HEK293 (cell line): ENCODE measurements at regions of chr6 and their contacts with region 1.

Region 1: DNA sequence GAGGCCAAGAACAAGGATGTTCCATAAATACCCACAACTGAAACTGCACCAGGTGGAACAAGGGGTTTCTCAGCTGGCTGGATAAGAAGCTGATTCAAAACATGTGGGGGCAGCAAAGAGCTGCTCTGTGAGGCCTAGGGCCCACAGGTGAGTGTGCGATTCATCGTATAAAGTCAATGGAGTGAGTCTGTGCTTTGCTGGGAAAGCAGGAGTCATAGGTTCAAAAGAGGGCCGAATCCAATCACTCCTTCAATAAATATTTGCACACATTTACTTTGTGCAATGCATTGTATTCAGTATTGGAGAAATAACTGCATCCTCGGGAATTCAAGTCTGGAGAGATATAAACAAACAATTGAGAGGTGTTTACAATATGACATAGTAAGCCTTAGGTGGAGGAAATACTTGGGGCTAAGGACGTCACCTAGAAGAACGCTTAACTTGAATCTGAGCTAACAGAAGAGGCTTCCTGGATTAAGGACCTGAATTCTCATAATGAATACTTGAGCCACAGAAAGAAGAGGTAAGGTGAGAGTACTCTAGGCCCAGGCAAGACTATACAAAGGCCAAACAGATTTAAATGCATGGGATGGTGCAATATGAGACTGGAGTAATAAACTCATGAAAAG is 83.7 kb upstream of the TMEM30A start:
- H3K4me3 ChIP-seq: no peak overlapping the region
- H3K27ac ChIP-seq: no peak overlapping the region
- H3K4me1 ChIP-seq: no peaks in the 10 kb centered on the region
- CTCF ChIP-seq: peak; percentile 71

Region 2: DNA sequence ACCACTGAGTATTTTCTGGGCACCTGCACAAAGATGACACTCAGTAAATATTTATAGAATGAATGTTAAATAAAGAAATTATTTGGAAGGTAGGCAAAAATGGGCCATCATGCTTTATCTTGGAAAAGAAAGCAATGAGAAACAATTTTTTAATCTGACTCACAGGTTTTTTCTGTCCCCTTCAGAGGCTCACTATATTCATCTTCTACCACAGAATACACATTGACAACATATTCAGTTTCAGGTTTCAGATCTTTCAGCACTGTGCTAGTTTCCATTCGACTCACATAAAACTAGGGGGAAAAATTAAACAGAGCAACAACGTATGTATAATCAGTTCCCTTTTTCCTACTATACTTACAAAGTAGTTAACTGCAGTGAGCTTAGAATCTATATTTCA is 220.8 kb before region 1 on chr6:
- CTCF ChIA-PET with region 1: no interaction called
- POLR2A ChIA-PET with region 1: no interaction called
- H3K4me3 ChIP-seq: no peak overlapping the region
- H3K27ac ChIP-seq: no peak overlapping the region
- H3K4me1 ChIP-seq: no peaks in the 10 kb centered on the region
- CTCF ChIP-seq: no peak

Region 3: GRCh38 chr6:75266716-75267291 is 101.5 kb before region 1 on chr6:
- CTCF ChIA-PET with region 1: interaction called, 28 read pairs
- POLR2A ChIA-PET with region 1: no interaction called
- H3K4me3 ChIP-seq: no peak overlapping the region
- H3K27ac ChIP-seq: no peak overlapping the region
- H3K4me1 ChIP-seq: peaks cover 14% of the 10 kb centered on the region
- CTCF ChIP-seq: no peak; the same call in 1 of the 2 replicates

Region 4: DNA sequence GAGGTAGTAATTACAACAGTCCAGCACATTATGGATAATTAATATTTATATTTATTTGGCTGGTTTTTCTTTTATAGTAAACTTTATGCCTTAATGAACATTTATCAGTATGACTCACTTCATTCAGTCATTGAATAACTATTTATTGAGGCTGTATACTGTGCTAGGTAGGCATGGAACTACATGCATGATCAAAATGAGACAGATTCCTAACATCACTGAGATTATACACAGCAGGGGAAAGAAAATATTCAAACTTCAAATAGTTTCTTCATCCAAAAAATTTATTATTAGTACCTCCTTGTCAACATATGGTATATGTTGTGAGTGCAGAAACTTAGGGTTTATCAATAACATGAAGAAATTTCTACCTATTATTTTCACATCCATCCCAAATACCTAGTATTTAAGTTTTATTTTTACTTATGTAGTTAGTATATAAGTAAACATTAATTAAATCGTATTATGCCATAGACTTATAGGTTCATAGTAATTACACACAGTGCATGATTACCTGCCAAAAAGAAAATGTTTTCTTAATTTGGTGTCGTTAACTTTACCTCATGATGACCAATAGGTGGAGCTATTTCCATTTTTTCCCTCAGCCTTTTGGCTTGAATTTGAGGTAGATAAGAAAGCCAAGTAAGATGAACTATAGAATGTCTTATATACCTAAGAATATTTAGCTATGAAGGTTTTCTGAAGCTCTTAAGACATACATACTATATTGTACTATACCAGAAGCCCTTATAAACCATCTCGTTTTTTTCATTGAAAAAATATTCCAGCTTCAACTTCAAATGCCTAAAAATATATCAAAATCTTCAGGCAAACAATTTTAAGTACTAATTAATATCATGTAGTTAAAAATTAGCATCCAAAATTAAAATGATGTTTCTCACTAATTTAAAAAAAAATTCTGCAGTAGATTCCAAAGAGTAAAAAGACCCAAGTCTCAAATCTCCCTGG is 71.2 kb before region 1 on chr6:
- CTCF ChIA-PET with region 1: interaction called, 86 read pairs
- POLR2A ChIA-PET with region 1: interaction called, 4 read pairs
- H3K4me3 ChIP-seq: no peak overlapping the region
- H3K27ac ChIP-seq: no peak overlapping the region
- H3K4me1 ChIP-seq: no peaks in the 10 kb centered on the region
- CTCF ChIP-seq: peak; percentile 47; the same call in 1 of the 2 replicates

Region 5: DNA sequence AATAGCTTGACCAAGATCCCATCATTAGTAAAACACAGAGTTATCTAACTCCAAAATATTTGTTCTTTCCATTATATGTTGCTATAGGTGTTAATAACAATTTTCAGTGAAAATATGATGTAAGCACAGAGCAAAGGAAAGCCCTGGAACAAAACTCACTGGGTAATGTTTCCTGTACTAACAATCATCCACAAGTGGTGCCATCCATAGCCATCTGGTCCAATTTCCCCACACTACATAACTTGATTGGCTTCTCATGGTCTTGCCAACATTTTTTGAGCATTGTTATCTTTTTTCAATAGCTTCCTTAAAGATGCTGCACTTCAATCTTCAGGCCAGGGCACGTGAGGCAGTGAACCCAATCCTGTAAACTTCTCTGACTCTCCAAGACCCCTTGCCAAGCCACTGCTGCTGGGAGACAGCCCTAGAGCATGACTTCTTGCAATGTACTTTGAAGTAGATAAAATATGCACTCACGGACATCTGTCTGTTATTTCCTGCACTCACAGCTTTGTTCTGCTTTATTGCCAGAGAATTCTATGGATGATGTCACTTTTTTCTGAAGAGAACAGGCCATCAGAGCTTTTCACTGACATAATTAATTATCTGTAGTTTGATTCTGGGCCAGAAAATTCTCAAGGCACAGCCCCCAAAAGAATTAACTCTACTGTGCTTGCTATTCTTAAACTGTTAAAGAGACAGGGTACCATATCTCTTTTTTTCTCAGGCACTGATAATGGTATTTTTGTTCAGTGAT is 13.8 kb after region 1 on chr6:
- CTCF ChIA-PET with region 1: interaction called, 31 read pairs
- POLR2A ChIA-PET with region 1: interaction called, 3 read pairs
- H3K4me3 ChIP-seq: no peak overlapping the region
- H3K27ac ChIP-seq: no peak overlapping the region
- H3K4me1 ChIP-seq: peaks cover 12% of the 10 kb centered on the region
- CTCF ChIP-seq: no peak

Region 6: DNA sequence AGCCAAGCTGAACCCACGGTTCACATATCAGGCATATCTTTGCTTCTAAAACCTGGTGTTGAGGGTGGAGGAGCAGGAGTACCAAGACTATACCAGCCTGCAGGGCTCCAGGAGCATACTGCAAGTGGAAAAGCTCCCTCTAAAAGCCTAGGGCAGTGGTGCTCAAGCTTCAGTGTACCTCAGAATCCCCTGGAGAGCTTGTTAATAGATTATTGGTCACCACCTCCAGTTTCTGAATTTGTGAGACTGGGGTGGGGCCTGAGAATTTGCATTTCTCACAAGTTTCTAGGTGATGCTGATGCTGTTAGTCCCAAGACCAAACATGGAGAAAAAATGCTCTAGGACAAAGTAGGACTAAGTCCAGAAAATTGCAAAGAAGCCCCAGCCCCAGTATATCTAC is 59.9 kb after region 1 on chr6:
- CTCF ChIA-PET with region 1: interaction called, 14 read pairs
- POLR2A ChIA-PET with region 1: no interaction called
- H3K4me3 ChIP-seq: no peak overlapping the region
- H3K27ac ChIP-seq: no peak overlapping the region
- H3K4me1 ChIP-seq: peaks cover 15% of the 10 kb centered on the region
- CTCF ChIP-seq: no peak

Region 7: DNA sequence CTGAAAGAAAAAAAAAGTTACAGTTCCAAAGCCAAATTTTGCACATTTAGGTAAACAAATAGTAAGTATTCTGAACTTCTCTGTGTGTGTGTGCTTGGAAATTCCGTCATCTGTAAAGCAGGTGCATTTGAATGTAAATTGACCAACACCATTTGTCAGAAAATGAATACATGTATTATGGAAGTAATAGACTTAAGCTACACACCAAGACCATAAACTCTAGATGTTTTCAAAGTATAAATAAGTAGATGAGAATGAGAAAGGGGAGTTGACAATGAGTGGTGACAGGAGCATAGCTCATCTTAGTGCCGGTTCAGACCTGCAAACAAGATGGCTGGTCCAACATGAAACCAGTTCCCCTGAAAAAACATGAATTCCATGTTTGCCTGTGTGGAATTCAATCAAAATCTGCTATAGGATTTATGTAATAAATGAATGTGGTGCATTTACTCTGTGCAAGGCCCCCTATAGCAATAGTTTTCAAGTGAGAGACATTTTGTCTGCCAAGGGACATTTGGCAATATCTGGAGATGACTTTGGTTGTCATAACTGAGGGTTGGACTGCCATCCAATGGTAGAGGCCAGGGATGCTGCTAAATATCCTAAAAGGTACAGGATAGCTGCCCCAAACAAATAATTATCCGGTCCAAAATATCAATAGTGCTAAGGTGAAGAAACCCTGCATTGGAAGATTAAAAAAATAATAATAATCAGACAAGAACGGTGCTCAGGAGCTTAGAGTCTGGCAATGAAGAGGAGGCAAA is 136.4 kb after region 1 on chr6:
- CTCF ChIA-PET with region 1: interaction called, 37 read pairs
- POLR2A ChIA-PET with region 1: no interaction called
- H3K4me3 ChIP-seq: no peak overlapping the region
- H3K27ac ChIP-seq: no peak overlapping the region
- H3K4me1 ChIP-seq: no peaks in the 10 kb centered on the region
- CTCF ChIP-seq: peak; percentile 59

Region 8: DNA sequence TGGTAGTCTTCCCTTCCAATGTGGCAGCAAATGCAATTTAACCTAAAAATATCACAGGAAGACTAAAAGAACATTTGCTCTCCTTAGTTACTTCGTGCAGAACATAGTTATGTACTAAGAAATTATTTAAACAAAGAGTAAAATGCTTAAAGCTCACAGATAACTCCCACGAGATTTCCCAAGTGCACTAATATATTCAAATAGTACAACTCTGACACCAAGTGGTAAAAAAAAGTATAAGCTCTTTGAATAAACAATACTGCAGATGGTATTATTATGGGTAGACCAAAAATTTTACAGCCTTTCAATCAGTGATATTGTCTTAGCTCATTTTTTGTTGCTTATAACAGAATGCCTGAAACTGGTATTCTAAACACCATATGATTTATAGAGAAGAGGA is 178.1 kb after region 1 on chr6:
- CTCF ChIA-PET with region 1: interaction called, 20 read pairs
- POLR2A ChIA-PET with region 1: no interaction called
- H3K4me3 ChIP-seq: no peak overlapping the region
- H3K27ac ChIP-seq: no peak overlapping the region
- H3K4me1 ChIP-seq: no peaks in the 10 kb centered on the region
- CTCF ChIP-seq: no peak